Dendritic cell treated with granulocyte-macrophage colony-stimulating factor and Interleukin-4, amounts not matched to agents 40 ng/mL and 50 ng/mL, for 4 days (primary cell): ENCODE measurements at regions of chr12 and their contacts with region 1.

Region 1: GRCh38 chr12:46209914-46210872 is 58.6 kb downstream of the SLC38A1 start:
- H3K4me3 Mint-ChIP-seq: no peak overlapping the region
- H3K27ac Mint-ChIP-seq: no peak overlapping the region
- H3K4me1 Mint-ChIP-seq: peaks cover 15% of the 10 kb centered on the region
- H3K27me3 Mint-ChIP-seq: peaks cover 41% of the 10 kb centered on the region

Region 2: GRCh38 chr12:46198913-46199312 is 11.3 kb before region 1 on chr12:
- intact Hi-C with region 1: no loop called
- H3K4me3 Mint-ChIP-seq: no peak overlapping the region
- H3K27ac Mint-ChIP-seq: no peak overlapping the region
- H3K4me1 Mint-ChIP-seq: no peaks in the 10 kb centered on the region
- H3K27me3 Mint-ChIP-seq: peaks cover 6% of the 10 kb centered on the region

Region 3: DNA sequence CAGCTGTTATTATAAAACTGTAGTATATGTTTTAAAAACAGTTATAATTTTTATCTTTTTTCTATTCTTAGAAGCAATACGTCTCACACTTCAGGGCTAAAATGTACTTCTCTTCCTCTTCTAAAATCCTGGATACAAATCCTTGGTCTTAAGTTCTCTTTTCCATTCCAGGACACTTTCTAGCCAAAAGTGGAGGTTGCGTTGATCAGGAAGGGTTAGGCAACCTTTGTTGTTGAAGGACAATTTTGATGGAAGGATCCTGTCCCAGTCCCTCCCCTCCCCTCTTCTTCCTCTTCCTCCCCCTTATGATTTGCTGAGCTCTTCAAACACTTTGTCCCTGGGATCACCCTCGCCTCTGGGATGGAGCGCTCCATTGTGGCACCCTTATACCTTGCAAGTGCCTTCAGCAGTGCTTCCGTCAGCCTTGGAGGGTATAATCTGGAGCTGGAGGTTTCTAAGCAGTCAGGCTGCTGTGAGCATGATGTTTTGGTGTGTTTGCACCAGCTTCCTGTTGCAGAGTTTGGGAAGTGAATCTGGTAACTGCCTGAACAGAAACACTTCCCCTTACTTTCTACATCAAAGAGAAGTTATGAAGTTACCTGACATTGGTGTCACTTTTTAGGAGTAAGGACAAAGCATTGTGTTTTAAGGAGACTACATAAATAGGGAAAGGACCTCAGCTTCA is 249.8 kb after region 1 on chr12:
- intact Hi-C with region 1: loop called (anchors 10 kb)
- H3K4me3 Mint-ChIP-seq: peak overlapping the region; percentile 70
- H3K27ac Mint-ChIP-seq: peak overlapping the region; percentile 87
- H3K4me1 Mint-ChIP-seq: peaks cover 48% of the 10 kb centered on the region
- H3K27me3 Mint-ChIP-seq: no peaks in the 10 kb centered on the region